Gastrocnemius medialis (tissue), 4 donors: ENCODE measurements at regions of chr6 and their contacts with region 1.

Region 1: DNA sequence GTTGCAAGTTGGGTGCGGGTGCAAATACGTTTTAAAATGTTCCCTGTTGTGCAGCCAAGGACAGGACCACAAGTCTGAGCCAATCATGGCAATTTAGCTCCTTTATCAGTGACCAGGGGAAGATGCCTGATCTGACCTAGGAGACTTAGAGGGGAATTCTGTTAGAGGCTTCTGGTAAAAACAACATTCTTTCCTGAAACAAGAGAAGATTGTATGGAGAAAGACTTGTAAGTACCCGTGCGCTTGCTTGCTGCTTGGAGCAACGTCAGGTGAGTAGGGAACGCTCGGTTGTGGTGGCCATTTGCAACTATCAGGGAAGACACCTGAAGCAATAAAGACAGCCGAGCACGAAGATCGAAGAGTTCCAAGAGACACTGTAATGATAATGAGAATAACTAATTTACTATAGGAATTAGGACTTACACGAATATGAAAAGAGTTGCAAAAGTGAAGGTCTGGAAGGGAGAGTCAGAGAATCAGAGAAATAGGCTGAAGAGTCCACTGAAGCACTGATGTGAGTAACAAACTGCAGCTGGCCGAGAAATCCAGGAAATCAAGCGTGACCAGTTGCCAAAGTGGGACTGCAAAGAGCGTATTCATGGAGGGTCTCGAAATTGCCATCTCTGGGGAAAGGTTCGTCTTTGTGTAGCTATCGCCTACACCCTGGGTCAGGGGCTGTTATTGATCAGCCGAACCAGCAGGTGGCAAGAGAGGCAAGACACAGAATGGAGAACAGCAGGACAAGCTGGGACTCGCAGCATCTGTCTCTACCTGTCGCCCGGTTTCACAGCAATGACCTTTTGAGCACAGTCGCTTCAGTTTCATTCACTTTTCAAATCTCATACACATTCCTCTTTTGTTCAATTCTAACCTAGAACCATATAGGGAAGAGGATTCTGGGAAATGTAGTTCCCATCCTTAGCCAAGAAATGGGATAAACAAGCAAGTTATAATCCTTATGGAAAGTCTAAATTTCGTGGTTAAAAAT is 26.1 kb downstream of the LOC128125822 start:
- DNase-seq: peak; percentile 31 to 51
- ATAC-seq: peak; percentile 91 to 97
- H3K4me3 ChIP-seq: peak overlapping the region; percentile 56 to 63 (median 62)
- H3K27ac ChIP-seq: no peak overlapping the region
- H3K4me1 ChIP-seq: peaks cover 5% of the 10 kb centered on the region in 2 donors
- H3K27me3 ChIP-seq: no peaks in the 10 kb centered on the region
- CTCF ChIP-seq: peak; percentile 77 to 89 (median 83)
- POLR2A ChIP-seq: no peak

Region 2: DNA sequence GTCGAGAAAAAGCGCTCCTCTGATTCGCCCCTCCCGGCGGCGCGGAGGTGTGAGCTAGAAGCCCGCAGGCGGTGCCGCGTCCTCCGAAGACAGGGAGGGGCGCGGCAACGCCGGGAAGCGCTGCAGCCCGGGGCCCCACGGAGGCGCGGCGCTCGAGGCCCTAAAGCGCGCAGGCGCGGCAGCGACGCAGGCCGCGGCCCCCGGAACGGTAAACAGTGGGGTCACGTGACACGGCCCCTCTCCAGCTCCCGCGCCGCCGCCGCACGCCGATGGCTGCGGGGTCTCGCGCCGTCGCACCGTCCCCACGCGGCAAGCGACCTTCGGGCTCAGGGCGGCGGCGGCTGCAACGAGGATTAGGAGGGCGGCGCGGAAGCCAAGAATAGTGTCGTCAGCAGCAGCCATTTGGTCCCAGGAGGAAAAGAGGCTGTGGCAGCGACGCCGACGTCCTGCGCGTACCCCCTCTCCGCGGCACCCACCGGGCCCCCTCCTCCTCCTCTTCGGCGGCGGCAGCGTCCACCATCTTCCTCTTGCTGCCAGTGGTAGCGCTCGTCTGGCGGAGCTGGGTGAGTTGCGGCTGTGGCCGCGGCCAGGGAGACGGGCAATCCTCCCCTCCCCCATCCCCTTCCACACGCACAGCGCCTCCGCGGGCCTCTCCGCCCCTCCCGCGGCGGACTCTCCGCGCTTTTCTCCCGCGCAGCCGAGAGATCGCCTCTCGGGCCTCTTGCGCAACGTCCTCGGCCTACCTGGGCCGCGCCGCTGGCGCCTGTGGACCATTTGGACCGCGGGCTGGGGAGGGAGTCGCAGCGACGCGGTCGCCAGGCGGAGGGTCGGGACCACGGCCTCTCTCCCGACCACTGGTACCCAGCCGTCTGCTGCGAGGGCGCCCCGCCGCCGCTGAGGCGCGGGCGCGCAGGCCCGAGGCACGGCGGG is 37.5 kb after region 1 on chr6 and contains the start of gene PHF3:
- in situ Hi-C with region 1: no loop called
- intact Hi-C with region 1: loop called (anchors 5 kb)
- DNase-seq: peak; percentile 80 to 86
- ATAC-seq: peak; percentile 84 to 85
- H3K4me3 ChIP-seq: peak within 1 kb of the TSS; percentile 76 to 93 (median 83)
- H3K27ac ChIP-seq: peak within 1 kb of the TSS; percentile 92 to 98 (median 96)
- H3K4me1 ChIP-seq: peaks cover 39 to 43% of the 10 kb centered on the region in 2 donors
- H3K27me3 ChIP-seq: no peaks in the 10 kb centered on the region
- CTCF ChIP-seq: peak in 3 of 5 experiments; percentile 24 to 50 (median 29)
- POLR2A ChIP-seq: peak; percentile 44 to 73
- total RNA-seq, gene PHF3: 49.4 to 73.1 (median 61.9) TPM

Region 3: DNA sequence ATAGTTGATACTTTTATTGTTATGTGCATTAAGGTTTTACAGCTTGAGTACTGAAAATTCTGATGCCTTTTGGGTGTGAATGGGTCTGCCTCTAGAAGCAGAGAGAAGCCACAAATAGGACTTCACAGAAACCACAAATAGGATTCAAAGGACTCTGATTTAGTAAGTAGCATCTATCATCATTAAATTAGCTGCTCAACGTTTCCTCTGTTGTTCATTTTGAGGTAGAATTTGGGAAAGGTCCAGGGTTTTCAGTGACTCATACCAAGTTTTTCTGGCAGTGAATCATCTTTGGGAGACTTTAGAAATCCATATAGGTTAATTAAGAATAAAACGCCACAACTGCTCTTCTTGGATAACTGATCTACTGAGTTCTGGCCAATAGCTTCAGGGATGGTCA is 142.4 kb after region 1 on chr6:
- in situ Hi-C with region 1: loop called in 1 of 4 experiments (anchors 10 kb)
- intact Hi-C with region 1: no loop called
- DNase-seq: no peak
- ATAC-seq: no peak
- H3K4me3 ChIP-seq: no peak overlapping the region
- H3K27ac ChIP-seq: no peak overlapping the region
- H3K4me1 ChIP-seq: no peaks in the 10 kb centered on the region
- H3K27me3 ChIP-seq: no peaks in the 10 kb centered on the region
- CTCF ChIP-seq: no peak
- POLR2A ChIP-seq: no peak

Region 4: GRCh38 chr6:63764318-63764916 is 166.1 kb after region 1 on chr6:
- in situ Hi-C with region 1: loop called (anchors 5 kb)
- intact Hi-C with region 1: loop called (anchors 1 kb)
- DNase-seq: no peak
- ATAC-seq: peak in 1 of 2 donors; percentile 56
- H3K4me3 ChIP-seq: no peak overlapping the region
- H3K27ac ChIP-seq: no peak overlapping the region
- H3K4me1 ChIP-seq: no peaks in the 10 kb centered on the region
- H3K27me3 ChIP-seq: no peaks in the 10 kb centered on the region
- CTCF ChIP-seq: peak; percentile 40 to 73 (median 55)
- POLR2A ChIP-seq: no peak